A549 (cell line): ENCODE measurements at regions of chr17 and their contacts with region 1.

Region 1: DNA sequence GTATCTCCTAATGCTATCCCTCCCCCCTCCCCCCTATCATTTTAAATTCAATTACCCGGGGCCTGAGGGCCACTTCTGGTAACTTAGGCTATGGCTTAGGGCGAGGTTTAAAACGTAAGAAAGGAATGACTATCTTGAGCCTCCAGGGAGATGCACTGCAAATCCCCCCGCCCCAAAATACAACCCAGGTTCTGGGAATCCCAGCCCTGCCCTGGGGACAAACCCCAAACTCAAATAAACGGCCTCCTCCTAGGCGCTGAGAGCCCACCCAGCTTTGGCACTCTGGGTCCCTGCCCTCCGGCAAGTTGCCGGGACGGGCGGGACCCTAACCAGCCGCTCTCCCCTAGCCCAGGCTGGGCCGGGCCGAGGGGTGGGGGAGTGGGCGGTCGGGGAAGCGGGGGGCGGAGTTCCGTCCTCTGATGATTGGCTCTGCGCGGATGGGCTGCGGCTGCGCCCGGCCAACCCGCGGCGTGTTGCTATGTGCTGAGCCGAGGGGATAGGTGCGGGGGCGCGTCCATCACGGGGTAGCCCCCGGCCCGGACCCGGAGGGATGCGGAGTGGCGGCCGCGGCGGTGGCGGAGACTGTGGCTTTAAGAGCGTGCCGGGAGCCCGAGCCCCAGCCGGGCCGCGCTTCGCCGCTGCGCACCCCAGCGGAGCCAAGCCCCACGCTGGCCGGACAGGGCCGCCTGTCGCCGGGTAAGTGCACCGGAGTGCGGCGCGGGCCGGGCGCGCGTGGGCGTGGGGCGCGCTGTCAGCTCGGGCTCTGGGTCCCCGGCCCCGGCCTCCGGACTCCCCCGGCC is at the start of gene YPEL2:
- DNase-seq: peak; percentile 95 to 98
- ATAC-seq: peak; percentile 85 to 97
- H3K4me3 ChIP-seq: peak within 1 kb of the TSS; percentile 99
- H3K27ac ChIP-seq: peak within 1 kb of the TSS; percentile 75 to 87
- H3K4me1 ChIP-seq: peaks cover 40% of the 10 kb centered on the region
- CTCF ChIP-seq: no peak; the same call in 2 of the 3 replicates
- EP300 ChIP-seq: no peak
- POLR2A ChIP-seq: peak; percentile 45; the same call in 1 of the 2 replicates
- RAD21 ChIP-seq: no peak
- polyA plus RNA-seq, gene YPEL2: 8.2 and 9.6 TPM in 2 replicates

Region 2: DNA sequence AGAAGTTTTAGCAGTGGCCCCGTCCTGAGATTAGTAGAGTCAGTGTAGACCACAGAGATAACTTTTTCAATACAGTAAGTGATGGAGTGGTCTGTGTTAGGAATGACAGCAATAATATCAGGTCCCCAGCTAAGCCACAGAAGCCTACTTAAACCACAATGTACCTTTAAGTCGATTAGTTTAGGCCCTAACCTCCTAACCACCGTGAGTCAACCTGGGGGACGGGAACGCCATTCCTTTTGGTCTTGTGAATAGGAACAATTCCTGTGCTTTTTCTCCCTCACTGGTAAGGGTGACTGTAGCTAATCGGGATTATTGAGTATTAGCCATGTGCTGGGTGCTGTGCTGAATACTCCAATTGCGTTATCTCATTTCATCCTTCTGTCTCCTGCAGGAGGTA is 14.1 kb after region 1 on chr17:
- CTCF ChIA-PET with region 1: interaction called, 21 read pairs
- POLR2A ChIA-PET with region 1: no interaction called
- DNase-seq: no peak
- ATAC-seq: no peak
- H3K4me3 ChIP-seq: no peak overlapping the region
- H3K27ac ChIP-seq: no peak overlapping the region
- H3K4me1 ChIP-seq: no peaks in the 10 kb centered on the region
- CTCF ChIP-seq: no peak
- EP300 ChIP-seq: no peak
- POLR2A ChIP-seq: no peak
- RAD21 ChIP-seq: no peak

Region 3: DNA sequence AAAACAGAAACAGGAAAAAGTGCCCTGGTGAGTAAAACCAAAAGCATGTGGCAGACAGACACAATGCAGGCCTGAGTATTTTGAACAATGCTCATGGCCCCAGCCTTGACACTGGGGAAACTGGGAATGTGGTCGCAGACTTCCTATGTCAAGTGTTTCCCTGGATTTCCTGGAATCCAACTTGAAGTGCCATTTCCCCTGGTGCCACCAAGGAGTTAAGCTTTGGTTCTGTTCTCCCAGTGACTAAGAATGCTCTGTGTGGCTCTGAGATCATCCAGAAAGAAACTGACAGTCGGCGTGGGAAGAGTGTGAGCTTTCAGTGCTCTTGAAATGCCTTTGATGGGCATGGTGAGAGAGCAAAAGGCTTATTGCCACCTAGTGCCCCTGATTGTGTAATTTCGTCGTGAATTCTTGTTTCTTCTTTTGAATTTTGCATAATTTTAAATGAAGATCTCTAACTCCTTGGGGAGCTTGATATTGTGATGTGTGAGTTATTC is 96.1 kb after region 1 on chr17:
- CTCF ChIA-PET with region 1: interaction called, 11 read pairs
- POLR2A ChIA-PET with region 1: no interaction called
- DNase-seq: peak in 1 of 2 experiments; percentile 20
- ATAC-seq: no peak
- H3K4me3 ChIP-seq: no peak overlapping the region
- H3K27ac ChIP-seq: peak overlapping the region in 1 of 2 experiments; percentile 23; a peak in 1 of 6 replicates
- H3K4me1 ChIP-seq: peaks cover 11% of the 10 kb centered on the region
- CTCF ChIP-seq: no peak
- EP300 ChIP-seq: no peak
- POLR2A ChIP-seq: no peak
- RAD21 ChIP-seq: no peak